Activated CD4-positive, alpha-beta T cell treated with anti-CD3 and anti-CD28 coated beads, Interleukin-2, amount 10 ng/mL, durations not matched to agents 7 days and 5 days (primary cell): ENCODE measurements at regions of chr7 and their contacts with region 1.

Region 1: GRCh38 chr7:92563345-92563744 is 26.8 kb downstream of the FAM133B start:
- DNase-seq: no peak
- H3K4me3 Mint-ChIP-seq: no peak overlapping the region
- H3K27ac Mint-ChIP-seq: no peak overlapping the region
- H3K4me1 Mint-ChIP-seq: no peaks in the 10 kb centered on the region
- H3K27me3 Mint-ChIP-seq: no peaks in the 10 kb centered on the region

Region 2: DNA sequence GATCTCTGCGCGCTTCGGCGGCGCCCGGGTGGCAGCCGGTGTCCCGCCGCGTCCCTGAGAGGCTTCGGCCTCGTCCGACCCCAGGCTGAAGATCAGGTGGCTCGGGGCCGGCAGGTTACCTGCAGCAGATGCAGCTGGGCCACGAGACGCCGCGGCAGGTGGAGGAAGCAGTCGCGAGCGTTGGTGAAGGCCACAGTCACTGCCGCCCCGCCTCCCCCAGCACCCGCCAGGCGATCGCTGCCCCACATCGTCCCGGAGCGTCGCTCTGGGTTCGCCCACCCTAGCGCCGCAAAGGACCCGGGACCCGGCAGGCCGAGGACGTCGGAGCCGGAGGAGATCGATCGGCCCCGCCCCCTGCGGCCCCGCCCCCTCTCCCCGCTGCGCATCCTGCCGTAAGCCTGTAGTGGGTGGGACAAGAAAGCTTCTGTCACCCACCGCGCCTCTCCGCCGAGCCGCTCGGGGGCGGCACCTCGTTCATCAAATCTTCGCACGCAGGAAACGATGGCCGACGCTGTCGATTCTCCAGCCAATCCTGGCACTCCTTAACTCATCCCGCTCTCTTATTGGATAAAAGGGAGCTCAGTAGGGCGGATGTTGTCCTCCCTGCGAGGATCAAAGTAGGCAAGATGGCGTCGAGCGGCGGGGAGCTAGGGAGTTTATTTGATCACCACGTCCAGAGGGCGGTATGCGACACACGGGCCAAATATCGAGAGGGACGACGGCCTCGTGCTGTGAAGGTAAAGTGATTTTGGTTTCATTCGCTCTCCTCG is 35.0 kb before region 1 on chr7 and contains the starts of genes PEX1 and RBM48:
- CTCF ChIA-PET with region 1: interaction called, 15 read pairs
- POLR2A ChIA-PET with region 1: no interaction called
- DNase-seq: peak; percentile 97
- H3K4me3 Mint-ChIP-seq: peak within 1 kb of the TSS; percentile 80
- H3K27ac Mint-ChIP-seq: peak within 1 kb of the TSS; percentile 94
- H3K4me1 Mint-ChIP-seq: peaks cover 34% of the 10 kb centered on the region
- H3K27me3 Mint-ChIP-seq: no peaks in the 10 kb centered on the region
- total RNA-seq, gene PEX1: 16.1 to 18.9 TPM
- total RNA-seq, gene RBM48: 17.7 to 18.4 TPM